ENCODE measurements at regions of chr12 and their contacts with region 1.

Region 1: DNA sequence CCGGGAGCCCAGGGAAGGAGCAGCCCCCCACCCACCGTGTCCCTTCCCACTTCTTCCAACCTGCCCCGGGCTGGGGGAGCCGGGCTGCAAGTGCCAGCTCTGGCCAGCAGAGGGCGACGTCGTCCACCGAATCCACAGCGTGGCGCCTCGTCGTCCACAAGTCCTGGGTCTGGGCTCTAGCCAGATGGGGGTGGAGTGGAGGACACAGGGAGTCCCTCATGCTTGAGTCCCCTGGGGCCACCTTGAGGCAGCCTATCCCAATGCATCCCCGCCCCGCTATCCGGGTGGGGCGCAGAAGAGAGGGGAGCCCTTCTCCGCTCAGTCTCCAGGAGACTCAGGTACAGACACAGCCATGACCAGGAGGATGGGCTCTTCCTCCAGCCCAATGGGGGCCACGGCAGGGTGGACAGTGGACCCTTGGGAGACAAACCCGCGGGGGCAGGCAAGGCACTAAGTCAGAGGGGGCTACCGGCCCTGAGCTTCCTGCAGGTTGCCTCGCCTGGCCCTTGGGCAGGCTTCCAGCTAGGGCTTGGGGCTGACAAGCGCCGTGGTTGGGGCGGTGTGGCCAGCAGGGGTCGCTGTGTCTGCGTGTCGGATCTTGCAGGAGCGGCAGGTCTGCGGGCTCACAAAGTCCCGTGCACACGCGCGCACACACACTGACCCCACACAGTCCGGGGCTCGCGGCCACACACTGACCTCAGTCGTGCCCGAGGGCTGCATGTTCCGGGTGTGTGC is 5.5 kb downstream of the AQP5 start:
- DNase-seq: peak; percentile 91
- CTCF ChIP-seq: peak; percentile 98

Region 2: GRCh38 chr12:49930515-49931288 is 36.5 kb before region 1 on chr12:
- CTCF ChIA-PET with region 1: interaction called, 16 read pairs
- POLR2A ChIA-PET with region 1: no interaction called
- DNase-seq: no peak
- CTCF ChIP-seq: no peak

Region 3: DNA sequence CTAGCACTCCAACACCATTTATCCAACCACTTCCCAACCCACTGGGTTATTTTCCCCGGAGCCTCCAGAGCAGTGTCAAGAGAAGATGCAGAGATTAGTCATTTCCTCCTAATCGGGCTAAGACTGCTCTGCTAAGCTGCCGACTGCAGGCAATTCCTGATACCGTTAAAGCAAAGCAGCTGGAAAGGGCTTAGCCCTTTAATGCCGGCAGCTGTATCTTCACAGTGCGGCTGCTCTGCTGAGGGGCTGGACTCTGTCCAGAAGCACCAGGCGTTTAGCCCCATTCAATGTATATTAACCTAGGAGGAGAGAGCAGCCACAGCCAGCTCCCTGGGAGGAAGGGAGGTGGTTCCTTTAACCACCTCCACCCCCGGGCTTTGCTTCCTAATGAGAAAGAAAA is 16.7 kb after region 1 on chr12:
- CTCF ChIA-PET with region 1: interaction called, 193 read pairs
- POLR2A ChIA-PET with region 1: interaction called, 4 read pairs
- DNase-seq: peak; percentile 11
- CTCF ChIP-seq: no peak

Region 4: DNA sequence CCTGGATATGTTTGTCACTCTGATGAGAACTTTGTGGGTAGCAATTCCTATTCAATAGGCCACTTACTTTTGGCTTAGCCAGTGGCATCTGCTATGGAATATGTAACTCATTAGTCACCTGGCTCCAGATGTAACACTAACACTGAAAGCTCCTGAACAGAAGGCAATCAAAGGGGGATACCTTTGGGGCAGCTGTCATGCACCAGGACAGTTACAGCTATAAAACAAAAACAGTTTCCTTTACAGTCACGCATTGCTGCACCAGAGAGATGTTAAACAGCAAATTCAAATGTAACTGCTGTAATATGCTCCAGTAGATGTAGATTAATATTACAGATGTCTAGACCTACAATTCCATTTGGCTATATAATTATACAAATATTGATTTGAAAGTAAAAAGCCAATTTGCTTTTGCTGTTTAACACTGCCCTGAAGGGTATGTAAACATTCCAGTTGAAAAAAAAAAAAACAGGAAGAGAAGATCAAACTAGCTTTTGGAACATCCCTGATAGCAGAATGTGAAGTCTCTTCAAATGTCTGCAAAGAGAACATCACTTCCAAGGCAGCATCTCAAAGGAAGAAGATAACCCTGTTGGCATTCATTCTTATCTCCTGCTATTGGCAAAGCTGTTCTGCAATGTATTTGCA is 39.7 kb after region 1 on chr12:
- CTCF ChIA-PET with region 1: interaction called, 22 read pairs
- POLR2A ChIA-PET with region 1: no interaction called
- DNase-seq: no peak
- CTCF ChIP-seq: no peak

Region 5: GRCh38 chr12:50032639-50033581 is 65.7 kb after region 1 on chr12:
- CTCF ChIA-PET with region 1: interaction called, 125 read pairs
- POLR2A ChIA-PET with region 1: no interaction called
- DNase-seq: no peak
- CTCF ChIP-seq: no peak

Region 6: DNA sequence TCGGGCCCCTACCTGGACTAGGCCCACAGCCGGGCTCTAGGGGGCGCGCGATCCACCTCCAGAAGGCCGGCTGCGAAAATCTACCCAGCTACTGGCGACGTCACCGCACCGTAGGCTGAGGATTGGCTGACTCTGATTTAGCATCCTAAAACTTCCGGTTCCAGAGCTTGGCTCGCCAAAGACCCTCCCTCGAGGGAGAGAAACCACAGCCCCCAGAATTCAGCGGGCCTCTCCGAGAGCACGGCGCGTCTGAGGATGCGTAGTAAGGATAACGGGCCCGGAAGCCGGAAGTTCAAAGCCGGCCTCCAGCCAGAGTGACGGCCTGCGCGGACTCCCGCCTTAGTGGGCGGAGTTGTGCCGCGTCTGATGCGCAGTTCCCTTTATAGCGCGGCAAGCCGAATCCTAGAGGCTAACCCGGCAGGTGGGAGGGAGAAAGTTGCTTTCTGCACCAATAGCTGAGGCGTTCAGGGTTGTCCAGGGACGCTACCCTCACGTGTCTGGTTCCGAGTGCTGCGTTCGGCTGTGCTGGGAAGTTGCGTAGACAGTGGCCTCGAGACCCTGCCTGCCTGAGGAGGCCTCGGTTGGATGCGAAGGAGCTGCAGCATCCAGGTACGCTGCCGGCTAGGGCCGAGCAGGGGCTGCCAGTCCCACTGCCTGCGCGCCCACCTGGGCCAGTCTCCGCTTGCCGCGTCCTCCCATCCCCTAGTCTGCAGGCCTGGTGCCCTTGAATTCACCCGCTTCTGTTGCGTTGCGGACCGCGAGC is 144.7 kb after region 1 on chr12 and contains the start of gene COX14:
- CTCF ChIA-PET with region 1: interaction called, 11 read pairs
- POLR2A ChIA-PET with region 1: no interaction called
- DNase-seq: peak; percentile 96
- CTCF ChIP-seq: peak; percentile 91

Measured in GM10248 (cell line).